CD4-positive, alpha-beta memory T cell (primary cell): ENCODE measurements at regions of chr6 and their contacts with region 1.

Region 1: DNA sequence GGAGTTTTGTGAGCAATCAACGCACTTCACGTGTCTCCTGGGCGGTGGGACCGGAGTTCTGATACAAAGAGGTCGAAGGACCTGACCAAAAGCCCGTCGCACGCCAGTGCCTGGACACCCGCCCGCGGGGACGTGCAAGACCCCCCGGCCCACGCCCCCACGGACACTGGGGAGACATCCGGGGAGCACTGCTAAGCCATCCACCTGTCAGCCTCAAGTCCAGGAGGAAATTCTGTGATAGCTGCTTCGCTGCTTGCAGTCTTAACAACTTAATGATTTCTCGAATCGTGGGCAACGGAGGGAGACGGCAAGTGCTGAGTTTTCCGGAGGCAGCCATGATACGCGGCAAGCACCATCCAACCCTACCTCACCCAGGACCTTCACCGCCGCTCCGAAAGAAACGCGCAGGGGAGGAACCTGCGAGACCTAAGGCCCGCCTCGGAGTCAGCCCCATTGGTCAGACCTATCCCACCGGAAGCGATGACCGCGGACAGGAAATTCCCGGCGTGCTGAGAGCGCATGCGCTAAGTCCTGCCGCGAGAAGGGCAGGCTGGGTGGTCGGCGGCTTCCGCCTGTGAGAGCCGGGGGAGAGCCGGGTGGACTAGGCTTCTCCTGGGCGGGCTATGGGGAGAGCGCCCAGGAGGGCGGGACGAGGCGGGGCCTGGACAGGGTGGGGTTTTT is at the start of gene TFB1M:
- DNase-seq: peak; percentile 97 to 98 (median 97)
- H3K4me3 ChIP-seq: peak within 1 kb of the TSS; percentile 85 to 95
- H3K4me3 Mint-ChIP-seq: peak within 1 kb of the TSS; percentile 92 to 98 (median 96)
- H3K27ac ChIP-seq: peak within 1 kb of the TSS; percentile 96
- H3K27ac Mint-ChIP-seq: peak within 1 kb of the TSS; percentile 95 to 98 (median 97)
- H3K4me1 ChIP-seq: peaks cover 37% of the 10 kb centered on the region
- H3K4me1 Mint-ChIP-seq: peaks cover 15 to 52% (median 35%) of the 10 kb centered on the region in 4 donors
- H3K27me3 ChIP-seq: no peaks in the 10 kb centered on the region
- H3K27me3 Mint-ChIP-seq: no peaks in the 10 kb centered on the region
- total RNA-seq, gene TFB1M: 36.6 to 45.7 TPM

Region 2: DNA sequence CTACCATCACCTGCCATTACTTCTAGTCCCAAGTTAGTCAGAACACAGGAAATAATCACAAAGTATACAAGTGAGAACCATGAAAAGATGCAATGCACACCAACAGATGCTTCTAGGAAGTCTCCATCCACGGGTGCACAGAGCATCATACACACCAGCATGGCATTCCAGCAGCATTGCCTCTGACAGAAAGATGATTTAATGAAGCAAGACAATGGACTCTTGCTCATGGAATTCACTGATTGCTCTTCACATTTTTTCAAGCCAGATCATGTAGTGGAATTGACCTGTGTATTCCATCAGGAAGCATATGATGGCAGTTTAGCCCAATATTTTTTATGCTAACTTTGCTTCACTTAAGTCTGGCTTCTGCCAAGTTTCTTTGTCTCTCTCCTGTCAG is 1776.8 kb before region 1 on chr6:
- CTCF ChIA-PET with region 1: no interaction called
- POLR2A ChIA-PET with region 1: no interaction called
- intact Hi-C with region 1: no loop called
- DNase-seq: no peak
- H3K4me3 ChIP-seq: no peak overlapping the region
- H3K4me3 Mint-ChIP-seq: no peak overlapping the region
- H3K27ac ChIP-seq: no peak overlapping the region
- H3K27ac Mint-ChIP-seq: no peak overlapping the region
- H3K4me1 ChIP-seq: no peaks in the 10 kb centered on the region
- H3K4me1 Mint-ChIP-seq: no peaks in the 10 kb centered on the region
- H3K27me3 ChIP-seq: no peaks in the 10 kb centered on the region
- H3K27me3 Mint-ChIP-seq: no peaks in the 10 kb centered on the region

Region 3: GRCh38 chr6:154247119-154247861 is 1066.9 kb before region 1 on chr6:
- CTCF ChIA-PET with region 1: no interaction called
- POLR2A ChIA-PET with region 1: no interaction called
- intact Hi-C with region 1: loop called (anchors 10 kb)
- DNase-seq: peak; percentile 50 to 64 (median 58)
- H3K4me3 ChIP-seq: peak overlapping the region; percentile 69 to 75
- H3K4me3 Mint-ChIP-seq: peak overlapping the region; percentile 89 to 99 (median 96)
- H3K27ac ChIP-seq: peak overlapping the region; percentile 87
- H3K27ac Mint-ChIP-seq: peak overlapping the region; percentile 89 to 97 (median 94)
- H3K4me1 ChIP-seq: peaks cover 75% of the 10 kb centered on the region
- H3K4me1 Mint-ChIP-seq: peaks cover 55 to 95% (median 74%) of the 10 kb centered on the region in 4 donors
- H3K27me3 ChIP-seq: no peaks in the 10 kb centered on the region
- H3K27me3 Mint-ChIP-seq: no peaks in the 10 kb centered on the region

Region 4: DNA sequence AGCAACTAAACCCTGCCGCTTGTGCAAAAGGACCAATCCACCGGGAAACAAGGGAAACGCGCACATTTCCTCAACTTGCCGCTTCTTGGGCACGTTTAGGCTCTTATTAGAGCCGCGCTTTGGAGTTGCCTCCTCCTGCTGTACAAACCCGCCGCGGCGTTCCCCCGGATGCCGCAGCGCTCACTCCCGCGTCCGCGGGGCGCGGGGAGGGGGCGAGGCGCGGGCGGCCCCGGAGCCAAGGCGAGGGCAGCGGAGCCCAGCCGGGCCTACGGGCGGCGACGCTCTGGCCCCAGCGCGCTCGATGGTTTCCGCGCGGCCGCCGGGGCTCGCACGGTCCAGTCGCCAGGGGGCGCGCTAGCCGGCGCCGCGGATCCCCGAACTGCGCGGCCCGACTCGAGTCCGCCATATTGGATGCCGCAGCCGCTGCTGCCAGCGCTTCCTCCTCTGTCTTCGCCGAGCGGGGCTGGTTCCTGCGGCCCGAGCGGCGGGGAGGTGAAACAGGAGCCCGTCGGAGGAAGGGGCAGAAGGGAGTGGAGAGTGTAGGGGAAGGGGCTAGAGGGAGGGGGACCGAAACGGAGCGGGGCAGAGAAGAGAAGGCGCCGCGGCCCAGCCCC is 581.1 kb before region 1 on chr6 and contains the start of gene SCAF8:
- CTCF ChIA-PET with region 1: no interaction called
- POLR2A ChIA-PET with region 1: no interaction called
- intact Hi-C with region 1: loop called (anchors 1 kb)
- DNase-seq: peak; percentile 77 to 93 (median 88)
- H3K4me3 ChIP-seq: peak within 1 kb of the TSS; percentile 63 to 68
- H3K4me3 Mint-ChIP-seq: peak within 1 kb of the TSS; percentile 87 to 95 (median 90)
- H3K27ac ChIP-seq: peak within 1 kb of the TSS; percentile 91
- H3K27ac Mint-ChIP-seq: peak within 1 kb of the TSS; percentile 82 to 98 (median 95)
- H3K4me1 ChIP-seq: peaks cover 45% of the 10 kb centered on the region
- H3K4me1 Mint-ChIP-seq: peaks cover 26 to 48% (median 36%) of the 10 kb centered on the region in 4 donors
- H3K27me3 ChIP-seq: no peaks in the 10 kb centered on the region
- H3K27me3 Mint-ChIP-seq: no peaks in the 10 kb centered on the region
- total RNA-seq, gene SCAF8: 59.9 to 60.5 TPM

Region 5: DNA sequence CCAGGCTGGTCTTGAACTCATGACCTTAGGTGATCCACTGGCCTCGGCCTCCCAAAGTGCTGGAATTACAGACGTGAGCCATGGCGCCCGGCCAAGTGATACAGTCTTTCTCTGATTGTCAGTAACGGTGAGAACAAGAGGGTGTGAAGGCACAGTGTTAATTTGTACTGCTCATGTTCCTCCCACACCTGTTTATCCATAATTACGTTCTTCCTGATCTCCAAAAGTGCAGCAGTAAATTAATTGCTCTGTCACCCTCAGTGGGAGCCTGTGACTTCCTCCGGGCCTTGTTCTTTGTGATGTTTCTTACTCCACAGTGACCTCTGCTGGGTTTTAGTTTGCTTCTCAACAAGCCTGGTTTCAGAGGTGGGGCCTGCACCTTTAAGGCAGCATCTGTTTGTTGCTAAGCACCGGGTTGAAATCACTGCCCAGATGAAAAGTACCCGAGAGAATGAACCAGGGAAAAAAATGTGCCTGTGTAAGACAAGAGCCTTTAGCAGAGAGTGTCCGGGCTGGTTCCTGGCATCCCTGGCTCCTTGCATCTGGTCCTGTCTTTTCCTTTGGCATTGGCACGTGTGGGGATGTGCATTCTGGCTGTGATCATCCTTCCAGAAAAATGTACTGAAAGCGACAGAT is 139.5 kb before region 1 on chr6:
- CTCF ChIA-PET with region 1: interaction called, 58 read pairs
- POLR2A ChIA-PET with region 1: interaction called, 18 read pairs
- intact Hi-C with region 1: loop called (anchors 1 kb)
- DNase-seq: peak; percentile 67 to 81 (median 73)
- H3K4me3 ChIP-seq: no peak overlapping the region
- H3K4me3 Mint-ChIP-seq: peak overlapping the region in 3 of 8 donors; percentile 3 to 26 (median 4)
- H3K27ac ChIP-seq: no peak overlapping the region
- H3K27ac Mint-ChIP-seq: peak overlapping the region; percentile 5 to 83 (median 62)
- H3K4me1 ChIP-seq: peaks cover 21% of the 10 kb centered on the region
- H3K4me1 Mint-ChIP-seq: peaks cover 21 to 41% (median 26%) of the 10 kb centered on the region in 4 donors
- H3K27me3 ChIP-seq: no peaks in the 10 kb centered on the region
- H3K27me3 Mint-ChIP-seq: no peaks in the 10 kb centered on the region

Region 6: GRCh38 chr6:155327326-155328073 is 13.3 kb after region 1 on chr6:
- CTCF ChIA-PET with region 1: interaction called, 38 read pairs
- POLR2A ChIA-PET with region 1: no interaction called
- intact Hi-C with region 1: no loop called
- DNase-seq: peak; percentile 47 to 65 (median 62)
- H3K4me3 ChIP-seq: no peak overlapping the region
- H3K4me3 Mint-ChIP-seq: no peak overlapping the region
- H3K27ac ChIP-seq: no peak overlapping the region
- H3K27ac Mint-ChIP-seq: peak overlapping the region in 2 of 7 donors; percentile 0 to 64
- H3K4me1 ChIP-seq: no peaks in the 10 kb centered on the region
- H3K4me1 Mint-ChIP-seq: peaks cover 0 to 5% (median 3%) of the 10 kb centered on the region in 4 donors
- H3K27me3 ChIP-seq: no peaks in the 10 kb centered on the region
- H3K27me3 Mint-ChIP-seq: peaks cover 0 to 1% of the 10 kb centered on the region in 2 donors

Region 7: DNA sequence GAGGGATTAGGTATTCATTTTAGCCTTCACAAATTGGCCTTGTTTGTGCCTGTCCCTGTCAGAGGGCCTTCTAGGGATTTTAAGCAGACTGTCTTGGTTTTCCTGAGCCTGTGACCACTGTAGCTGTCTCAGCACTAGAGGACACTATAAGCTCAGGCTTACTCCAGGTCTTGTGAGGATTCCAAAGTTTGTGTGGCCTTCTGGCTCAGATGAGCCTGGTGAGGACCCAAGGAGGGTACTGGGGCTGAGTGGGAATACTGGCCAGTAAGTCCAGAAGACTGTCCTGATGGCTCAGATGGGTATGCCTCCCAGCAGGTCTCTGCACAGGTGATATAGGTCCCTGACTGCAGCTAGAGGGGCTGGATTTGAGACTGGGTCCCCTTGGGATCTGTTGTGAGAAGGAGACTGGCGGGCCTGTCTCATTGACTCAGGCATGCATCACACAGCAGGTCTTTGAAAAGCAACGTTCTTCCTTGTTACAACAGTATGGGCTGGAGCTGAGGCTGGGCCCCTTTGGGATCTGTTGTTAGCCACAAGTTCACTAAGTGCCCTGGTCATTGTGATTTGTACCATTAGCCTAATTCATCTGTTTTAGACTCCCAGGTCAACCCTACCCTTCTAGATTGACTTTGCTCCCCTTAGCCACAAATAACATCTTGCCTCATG is 26.4 kb after region 1 on chr6:
- CTCF ChIA-PET with region 1: no interaction called
- POLR2A ChIA-PET with region 1: no interaction called
- intact Hi-C with region 1: no loop called
- DNase-seq: no peak
- H3K4me3 ChIP-seq: no peak overlapping the region
- H3K4me3 Mint-ChIP-seq: no peak overlapping the region
- H3K27ac ChIP-seq: no peak overlapping the region
- H3K27ac Mint-ChIP-seq: no peak overlapping the region
- H3K4me1 ChIP-seq: no peaks in the 10 kb centered on the region
- H3K4me1 Mint-ChIP-seq: peaks cover 6 to 16% (median 10%) of the 10 kb centered on the region in 4 donors
- H3K27me3 ChIP-seq: no peaks in the 10 kb centered on the region
- H3K27me3 Mint-ChIP-seq: peaks cover 0 to 4% of the 10 kb centered on the region in 2 donors

Region 8: GRCh38 chr6:155472886-155473285 is 158.7 kb after region 1 on chr6:
- CTCF ChIA-PET with region 1: no interaction called
- POLR2A ChIA-PET with region 1: no interaction called
- intact Hi-C with region 1: no loop called
- DNase-seq: no peak
- H3K4me3 ChIP-seq: no peak overlapping the region
- H3K4me3 Mint-ChIP-seq: no peak overlapping the region
- H3K27ac ChIP-seq: no peak overlapping the region
- H3K27ac Mint-ChIP-seq: no peak overlapping the region
- H3K4me1 ChIP-seq: no peaks in the 10 kb centered on the region
- H3K4me1 Mint-ChIP-seq: no peaks in the 10 kb centered on the region
- H3K27me3 ChIP-seq: no peaks in the 10 kb centered on the region
- H3K27me3 Mint-ChIP-seq: peaks cover 4% of the 10 kb centered on the region in 2 donors

Region 9: DNA sequence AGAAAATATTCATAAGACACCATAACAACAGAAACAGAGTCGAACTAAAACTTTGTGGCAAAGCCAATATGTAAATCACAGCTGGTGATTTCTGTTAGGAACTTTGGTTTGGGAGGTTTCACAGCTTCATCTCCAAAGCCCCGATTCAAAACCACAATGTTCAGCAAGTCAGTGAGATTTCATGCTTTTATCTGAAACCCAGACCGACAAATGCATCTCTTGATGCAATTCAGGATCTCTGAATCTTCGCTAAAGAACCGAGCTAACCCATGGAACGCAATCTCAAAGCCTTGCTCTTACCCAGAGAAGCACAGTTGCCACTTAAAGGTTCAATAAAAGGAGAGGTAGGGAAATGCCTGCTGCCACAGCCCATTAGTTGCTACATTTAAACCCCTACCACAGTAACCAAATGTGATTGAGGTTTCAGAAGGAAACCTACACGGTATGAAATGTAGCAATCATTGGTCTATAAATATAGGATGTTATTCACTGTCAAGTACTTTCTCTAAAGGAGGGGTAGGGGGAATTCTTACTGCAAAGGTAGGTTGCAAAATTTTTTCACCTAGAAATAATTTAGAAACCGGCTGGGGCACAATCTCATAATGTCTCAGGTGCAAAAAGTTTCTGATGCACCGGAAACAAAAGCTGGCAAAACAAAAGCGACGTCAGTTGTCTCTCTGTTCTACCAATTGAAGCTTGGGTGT is 1082.0 kb after region 1 on chr6:
- CTCF ChIA-PET with region 1: no interaction called
- POLR2A ChIA-PET with region 1: interaction called, 4 read pairs
- intact Hi-C with region 1: loop called (anchors 2 kb)
- DNase-seq: peak; percentile 69 to 80 (median 73)
- H3K4me3 ChIP-seq: peak overlapping the region; percentile 9 to 53
- H3K4me3 Mint-ChIP-seq: peak overlapping the region; percentile 78 to 89 (median 86)
- H3K27ac ChIP-seq: peak overlapping the region; percentile 56
- H3K27ac Mint-ChIP-seq: peak overlapping the region; percentile 90 to 100 (median 98)
- H3K4me1 ChIP-seq: peaks cover 84% of the 10 kb centered on the region
- H3K4me1 Mint-ChIP-seq: peaks cover 51 to 89% (median 75%) of the 10 kb centered on the region in 4 donors
- H3K27me3 ChIP-seq: no peaks in the 10 kb centered on the region
- H3K27me3 Mint-ChIP-seq: no peaks in the 10 kb centered on the region

Region 10: DNA sequence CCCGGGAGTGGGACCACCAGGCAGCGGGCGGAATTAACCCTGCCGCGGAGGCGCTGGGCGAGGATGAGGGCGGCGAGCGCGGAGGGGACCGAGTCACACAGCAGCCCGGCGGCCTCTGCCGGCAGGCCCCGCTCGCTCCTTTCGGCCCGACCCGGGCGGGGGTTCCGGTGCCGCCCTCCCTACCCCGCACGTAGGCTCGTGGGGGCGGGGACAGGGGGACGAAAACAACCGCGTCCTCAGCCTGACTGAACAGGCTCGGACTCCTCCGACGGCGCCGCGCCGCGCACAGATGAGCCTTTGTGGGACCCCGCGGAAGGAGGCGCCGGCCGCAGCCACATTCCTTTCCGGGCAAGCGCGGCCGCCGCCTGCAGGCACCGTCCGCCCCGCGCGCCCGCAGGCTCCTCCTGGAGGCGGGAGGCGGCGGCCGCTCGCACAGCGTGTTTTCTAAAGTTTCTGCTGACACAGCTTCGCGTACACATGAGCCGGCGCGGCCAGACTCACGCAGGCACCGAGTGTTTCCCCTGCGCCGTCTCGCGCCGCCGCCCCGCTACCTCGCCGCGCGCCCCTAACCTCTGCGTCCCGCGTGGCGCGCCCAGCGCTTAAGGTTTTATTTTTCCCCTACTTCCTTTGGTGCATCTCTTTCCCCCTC is 1707.2 kb after region 1 on chr6:
- CTCF ChIA-PET with region 1: no interaction called
- POLR2A ChIA-PET with region 1: interaction called, 3 read pairs
- intact Hi-C with region 1: loop called (anchors 1 kb)
- DNase-seq: peak; percentile 88 to 93 (median 91)
- H3K4me3 ChIP-seq: peak overlapping the region; percentile 54 to 86
- H3K4me3 Mint-ChIP-seq: peak overlapping the region; percentile 95 to 98 (median 96)
- H3K27ac ChIP-seq: peak overlapping the region; percentile 98
- H3K27ac Mint-ChIP-seq: peak overlapping the region; percentile 97 to 100 (median 99)
- H3K4me1 ChIP-seq: peaks cover 31% of the 10 kb centered on the region
- H3K4me1 Mint-ChIP-seq: peaks cover 30 to 55% (median 44%) of the 10 kb centered on the region in 4 donors
- H3K27me3 ChIP-seq: no peaks in the 10 kb centered on the region
- H3K27me3 Mint-ChIP-seq: no peaks in the 10 kb centered on the region